ENCODE measurements at regions of chr12 and their contacts with region 1.

Region 1: DNA sequence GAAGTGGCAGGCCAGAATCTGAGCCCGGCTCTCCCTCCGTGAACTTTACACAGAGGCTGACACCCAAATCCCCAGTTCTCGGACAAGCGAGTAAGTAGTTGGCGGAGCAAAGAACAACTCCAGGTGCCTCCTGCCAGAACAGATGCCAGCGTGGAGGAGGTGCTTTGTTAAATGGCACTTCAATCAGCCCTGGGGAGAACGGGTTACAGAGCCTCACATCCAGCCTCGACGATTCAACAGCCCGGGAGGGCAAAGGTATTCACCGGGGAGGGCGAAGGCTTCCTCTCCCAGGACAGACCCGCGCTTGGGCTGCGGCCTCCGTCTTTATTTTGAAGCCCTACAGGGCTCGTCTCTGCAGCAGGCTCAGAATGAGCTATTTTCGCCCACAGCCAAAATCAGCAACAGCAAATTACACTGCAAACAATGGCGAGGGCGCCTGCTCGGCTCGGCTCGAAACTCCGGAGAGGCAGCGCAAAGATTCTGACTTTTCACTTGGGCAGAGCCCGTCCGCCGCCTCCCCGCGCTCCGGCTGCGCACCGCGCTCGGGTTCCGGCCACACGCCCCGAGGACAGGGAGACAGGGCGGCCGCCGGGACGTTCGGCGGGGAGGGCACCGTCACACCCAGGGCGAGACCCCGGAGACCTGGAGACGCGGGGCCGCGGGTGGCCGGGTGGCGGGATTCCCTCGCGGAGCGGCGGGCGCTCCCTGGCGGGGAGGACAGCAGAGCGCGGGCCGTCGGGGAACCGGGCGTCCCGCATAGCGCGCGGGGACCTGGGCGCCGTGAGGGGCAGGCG is 811 bp downstream of the TMCC3 start:
- DNase-seq: peak; percentile 31 to 93 (median 49)

Region 2: GRCh38 chr12:94553130-94553519 is 96.4 kb before region 1 on chr12:
- intact Hi-C with region 1: loop called (anchors 10 kb)
- DNase-seq: peak in 3 of 10 donors; percentile 32 to 70 (median 40)

Region 3: DNA sequence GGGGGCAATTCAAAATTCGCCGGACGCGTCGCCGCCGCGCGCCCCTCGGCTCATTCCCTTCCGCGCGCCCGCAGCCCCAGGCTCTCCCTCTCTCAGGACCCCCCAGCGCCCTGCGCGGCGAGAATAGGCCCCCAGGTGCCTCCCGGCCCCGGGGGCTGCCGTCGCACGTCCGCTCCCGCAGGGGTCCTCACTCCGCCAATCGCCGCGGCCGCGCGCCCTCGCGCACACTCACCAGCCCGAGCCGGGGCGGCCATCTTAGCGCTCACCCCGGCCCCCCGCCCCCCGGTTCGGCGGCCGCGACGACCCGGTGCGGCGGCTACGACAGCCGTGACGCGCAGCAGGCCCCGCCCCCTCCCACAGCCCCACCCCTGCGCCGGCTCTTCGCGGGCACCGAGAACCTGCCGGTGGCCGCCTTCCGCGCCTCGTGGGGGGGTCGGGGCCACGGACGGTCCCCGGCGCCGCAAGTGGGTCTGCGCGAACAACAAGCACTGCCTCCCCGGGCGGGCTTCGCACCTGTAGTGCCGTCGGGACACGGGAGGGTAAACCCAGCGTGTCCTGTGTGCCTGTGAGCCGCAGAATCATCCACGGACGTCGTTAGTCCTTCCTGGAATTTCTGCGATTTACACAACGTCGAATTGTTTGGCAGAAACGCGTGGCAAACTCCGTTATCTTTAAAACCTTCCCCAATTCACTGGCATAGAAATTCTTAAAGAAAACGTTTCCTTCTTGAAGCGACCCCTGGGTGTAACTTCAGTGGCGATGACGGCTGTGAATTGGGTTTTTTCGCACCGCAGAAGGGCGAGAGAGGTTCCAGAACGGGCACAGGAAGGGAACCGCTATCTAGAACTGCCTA is 899.2 kb after region 1 on chr12:
- intact Hi-C with region 1: loop called (anchors 5 kb)
- DNase-seq: peak in 9 of 10 donors; percentile 21 to 91 (median 53)